ENCODE measurements at regions of chr4 and their contacts with region 1.

Region 1: DNA sequence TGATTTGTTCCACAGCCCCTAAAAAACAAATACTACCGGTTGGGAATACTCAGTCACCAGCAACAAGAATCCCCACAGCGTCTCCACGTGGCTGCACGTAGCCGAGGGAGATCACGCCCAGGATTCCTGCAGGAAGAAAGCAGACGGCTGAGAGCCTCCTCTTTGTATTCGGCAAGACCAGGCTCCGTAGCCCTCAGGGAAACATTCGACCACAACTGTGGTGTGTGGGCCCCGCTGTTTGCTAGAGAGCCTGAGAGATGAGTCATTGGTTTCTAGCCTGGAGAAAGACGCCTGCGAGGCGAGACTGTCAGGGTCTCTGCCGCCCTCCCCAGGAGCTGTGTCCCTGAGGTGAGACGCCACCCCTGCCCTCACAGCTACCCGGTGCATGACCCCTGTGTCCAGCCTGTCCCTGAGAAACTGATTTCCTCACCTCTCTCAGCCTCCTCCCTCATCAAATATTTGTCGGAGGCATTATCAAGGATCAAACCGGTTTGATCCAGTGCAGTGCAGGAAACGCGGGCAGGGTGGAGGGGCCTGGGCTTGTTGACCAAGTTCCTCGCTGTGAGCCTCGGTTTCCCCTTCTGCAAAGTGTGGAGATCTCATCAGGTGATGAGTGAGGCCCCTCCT is 4.7 kb upstream of the S100P start:
- DNase-seq: peak; percentile 96
- ATAC-seq: peak; percentile 79
- H3K4me3 Mint-ChIP-seq: peak overlapping the region; percentile 82
- H3K27ac Mint-ChIP-seq: peak overlapping the region; percentile 98
- H3K4me1 Mint-ChIP-seq: peaks cover 73% of the 10 kb centered on the region
- H3K27me3 Mint-ChIP-seq: no peaks in the 10 kb centered on the region

Region 2: GRCh38 chr4:6640292-6641163 is 48.5 kb before region 1 on chr4 and contains the start of gene MRFAP1:
- CTCF ChIA-PET with region 1: interaction called, 14 read pairs
- DNase-seq: peak; percentile 96
- ATAC-seq: peak; percentile 83
- H3K4me3 Mint-ChIP-seq: peak within 1 kb of the TSS; percentile 99
- H3K27ac Mint-ChIP-seq: peak within 1 kb of the TSS; percentile 100
- H3K4me1 Mint-ChIP-seq: peaks cover 23% of the 10 kb centered on the region
- H3K27me3 Mint-ChIP-seq: no peaks in the 10 kb centered on the region
- total RNA-seq, gene MRFAP1: 109 to 122 TPM

Region 3: GRCh38 chr4:6701371-6701770 is 12.4 kb after region 1 on chr4:
- CTCF ChIA-PET with region 1: interaction called, 43 read pairs
- DNase-seq: peak; percentile 62
- ATAC-seq: no peak
- H3K4me3 Mint-ChIP-seq: no peak overlapping the region
- H3K27ac Mint-ChIP-seq: no peak overlapping the region
- H3K4me1 Mint-ChIP-seq: peaks cover 66% of the 10 kb centered on the region
- H3K27me3 Mint-ChIP-seq: no peaks in the 10 kb centered on the region

Region 4: GRCh38 chr4:6709230-6710114 is 20.5 kb after region 1 on chr4 and contains the start of gene MRFAP1L1:
- CTCF ChIA-PET with region 1: interaction called, 43 read pairs
- DNase-seq: peak; percentile 98
- ATAC-seq: peak; percentile 86
- H3K4me3 Mint-ChIP-seq: peak within 1 kb of the TSS; percentile 93
- H3K27ac Mint-ChIP-seq: peak within 1 kb of the TSS; percentile 98
- H3K4me1 Mint-ChIP-seq: peaks cover 52% of the 10 kb centered on the region
- H3K27me3 Mint-ChIP-seq: no peaks in the 10 kb centered on the region
- total RNA-seq, gene MRFAP1L1: 60.7 to 61.9 TPM

Region 5: DNA sequence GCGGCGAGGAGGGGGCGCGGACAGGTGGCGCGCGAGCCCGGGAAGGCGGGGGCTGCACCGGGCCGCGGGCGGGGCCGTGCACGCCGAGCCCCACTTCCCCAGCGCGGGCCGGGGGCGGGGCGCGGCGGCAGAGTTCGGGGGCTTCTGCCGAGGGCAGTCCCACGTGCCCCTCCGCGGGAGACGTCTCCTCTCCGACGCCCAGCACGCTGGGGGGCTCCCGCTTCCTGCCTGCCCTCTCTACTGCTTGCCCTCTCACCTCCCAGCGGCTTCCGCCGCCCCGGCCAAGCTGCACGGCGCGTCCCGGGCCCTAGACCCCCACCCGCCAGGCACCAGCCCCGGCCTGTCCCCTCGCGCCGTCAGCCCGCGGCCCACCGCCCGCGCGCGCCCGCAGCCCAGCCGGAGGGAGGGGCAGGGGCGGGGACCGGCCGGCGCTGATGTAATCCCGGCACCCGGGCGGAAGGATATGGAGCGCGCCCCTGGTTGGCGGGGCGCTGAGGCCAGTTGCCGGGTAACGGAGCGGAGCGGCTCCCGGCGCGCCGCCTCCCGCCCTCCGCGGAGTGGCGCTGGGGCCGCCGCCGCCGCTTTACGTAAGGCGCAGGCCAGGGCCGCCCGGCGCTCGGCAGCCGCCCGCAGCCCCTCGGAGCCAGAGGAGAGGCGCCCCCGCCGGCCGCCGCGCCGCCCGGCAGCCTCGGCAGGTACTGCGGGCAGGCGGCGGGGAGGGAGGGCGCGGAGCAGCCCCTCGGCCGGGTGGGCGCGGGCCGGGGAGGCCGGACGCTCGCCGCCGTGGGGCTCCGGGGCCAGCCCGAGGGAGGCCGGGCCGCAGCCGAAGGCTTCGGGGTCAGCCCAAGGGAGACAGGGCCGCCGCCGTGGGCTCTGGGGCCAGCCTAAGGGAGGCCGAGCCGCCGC is 93.4 kb after region 1 on chr4 and contains the start of gene KIAA0232:
- CTCF ChIA-PET with region 1: no interaction called
- DNase-seq: peak; percentile 89
- ATAC-seq: peak; percentile 79
- H3K4me3 Mint-ChIP-seq: peak within 1 kb of the TSS; percentile 80
- H3K27ac Mint-ChIP-seq: peak within 1 kb of the TSS; percentile 83
- H3K4me1 Mint-ChIP-seq: peaks cover 52% of the 10 kb centered on the region
- H3K27me3 Mint-ChIP-seq: no peaks in the 10 kb centered on the region
- total RNA-seq, gene KIAA0232: 17.5 to 19.8 TPM

Measured in activated CD8-positive, alpha-beta memory T cell treated with anti-CD3 and anti-CD28 coated beads, Interleukin-2, amount 10 ng/mL, durations not matched to agents 7 days and 5 days (primary cell).